ENCODE measurements at regions of chr1 and their contacts with region 1.

Region 1: GRCh38 chr1:9629445-9630201 is 21.9 kb upstream of the PIK3CD start:
- DNase-seq: peak; percentile 91
- ATAC-seq: peak; percentile 40
- H3K4me3 Mint-ChIP-seq: peak overlapping the region; percentile 88
- H3K27ac Mint-ChIP-seq: peak overlapping the region; percentile 98
- H3K4me1 Mint-ChIP-seq: peaks cover 63% of the 10 kb centered on the region
- H3K27me3 Mint-ChIP-seq: no peaks in the 10 kb centered on the region

Region 2: GRCh38 chr1:9486466-9487140 is 143.0 kb before region 1 on chr1:
- CTCF ChIA-PET with region 1: no interaction called
- POLR2A ChIA-PET with region 1: no interaction called
- DNase-seq: no peak
- ATAC-seq: no peak
- H3K4me3 Mint-ChIP-seq: no peak overlapping the region
- H3K27ac Mint-ChIP-seq: no peak overlapping the region
- H3K4me1 Mint-ChIP-seq: peaks cover 3% of the 10 kb centered on the region
- H3K27me3 Mint-ChIP-seq: peaks cover 2% of the 10 kb centered on the region

Region 3: GRCh38 chr1:9643351-9644256 is 14.0 kb after region 1 on chr1:
- CTCF ChIA-PET with region 1: interaction called, 73 read pairs
- POLR2A ChIA-PET with region 1: interaction called, 58 read pairs
- DNase-seq: no peak
- ATAC-seq: peak; percentile 10
- H3K4me3 Mint-ChIP-seq: peak overlapping the region; percentile 26
- H3K27ac Mint-ChIP-seq: peak overlapping the region; percentile 86
- H3K4me1 Mint-ChIP-seq: peaks cover 74% of the 10 kb centered on the region
- H3K27me3 Mint-ChIP-seq: no peaks in the 10 kb centered on the region

Region 4: DNA sequence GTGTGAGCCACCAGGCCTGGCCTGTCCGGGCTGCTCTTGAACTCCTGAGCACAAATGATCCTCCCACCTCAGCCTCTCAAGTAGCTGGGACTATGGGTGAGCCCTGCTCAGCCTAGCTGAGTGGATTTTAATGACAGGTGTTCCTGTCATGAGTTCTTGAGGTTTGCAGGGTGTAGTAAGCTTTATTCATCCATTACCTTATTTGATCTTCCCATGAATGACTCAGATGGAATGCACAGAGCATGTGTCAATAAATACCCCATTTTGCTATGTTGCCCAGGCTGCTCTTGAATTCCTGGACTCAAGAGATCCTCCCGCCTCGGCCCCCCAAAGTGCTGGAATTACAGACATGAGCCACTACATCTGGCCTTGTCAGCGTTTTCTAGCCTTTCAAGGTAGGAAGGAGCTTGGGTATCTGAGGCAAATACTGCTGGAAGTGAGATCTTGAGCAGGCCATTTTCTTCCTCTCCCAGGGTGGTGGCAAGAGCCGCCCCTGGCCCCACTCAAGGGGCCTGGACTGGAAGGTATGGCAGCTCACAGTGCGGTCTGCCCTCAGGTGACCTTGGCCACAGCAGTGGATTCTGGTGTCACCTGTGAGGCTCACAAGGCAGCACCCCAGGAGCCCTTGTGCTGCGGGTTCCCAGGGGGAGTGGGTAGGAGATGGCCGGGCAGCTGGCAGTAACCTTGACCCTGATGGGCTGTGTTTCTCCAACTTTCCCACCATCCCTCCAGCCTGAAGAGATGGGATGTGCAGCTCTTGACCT is 41.9 kb after region 1 on chr1:
- CTCF ChIA-PET with region 1: interaction called, 12 read pairs
- POLR2A ChIA-PET with region 1: interaction called, 8 read pairs
- DNase-seq: no peak
- ATAC-seq: peak; percentile 23
- H3K4me3 Mint-ChIP-seq: no peak overlapping the region
- H3K27ac Mint-ChIP-seq: peak overlapping the region; percentile 57
- H3K4me1 Mint-ChIP-seq: peaks cover 62% of the 10 kb centered on the region
- H3K27me3 Mint-ChIP-seq: no peaks in the 10 kb centered on the region

Region 5: DNA sequence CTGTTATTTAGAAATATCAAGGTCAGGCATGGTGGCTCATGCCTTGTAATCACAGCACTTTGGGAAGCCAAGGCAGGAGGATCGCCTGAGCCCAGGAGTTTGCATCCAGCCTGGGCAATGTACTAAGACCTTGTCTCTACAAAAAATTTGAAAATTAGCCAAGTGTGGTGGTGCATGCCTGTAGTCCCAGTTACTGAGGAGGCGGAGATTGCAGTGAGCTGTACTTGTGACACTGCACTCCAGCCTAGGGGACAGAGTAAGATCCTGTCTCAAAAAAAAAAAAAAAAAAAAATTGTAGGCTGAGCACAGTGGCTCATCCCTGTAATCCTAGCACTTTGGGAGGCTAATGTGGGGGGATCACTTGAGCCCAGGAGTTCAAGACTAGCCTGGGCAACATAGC is 67.2 kb after region 1 on chr1:
- CTCF ChIA-PET with region 1: interaction called, 72 read pairs
- POLR2A ChIA-PET with region 1: interaction called, 5 read pairs
- DNase-seq: no peak
- ATAC-seq: no peak
- H3K4me3 Mint-ChIP-seq: no peak overlapping the region
- H3K27ac Mint-ChIP-seq: no peak overlapping the region
- H3K4me1 Mint-ChIP-seq: peaks cover 53% of the 10 kb centered on the region
- H3K27me3 Mint-ChIP-seq: no peaks in the 10 kb centered on the region

Region 6: GRCh38 chr1:9717193-9718005 is 87.8 kb after region 1 on chr1:
- CTCF ChIA-PET with region 1: interaction called, 204 read pairs
- POLR2A ChIA-PET with region 1: interaction called, 152 read pairs
- DNase-seq: peak; percentile 98
- ATAC-seq: peak; percentile 73
- H3K4me3 Mint-ChIP-seq: peak overlapping the region; percentile 96
- H3K27ac Mint-ChIP-seq: peak overlapping the region; percentile 96
- H3K4me1 Mint-ChIP-seq: peaks cover 76% of the 10 kb centered on the region
- H3K27me3 Mint-ChIP-seq: no peaks in the 10 kb centered on the region

Region 7: GRCh38 chr1:9867408-9868243 is 238.0 kb after region 1 on chr1:
- CTCF ChIA-PET with region 1: interaction called, 17 read pairs
- POLR2A ChIA-PET with region 1: no interaction called
- DNase-seq: peak; percentile 92
- ATAC-seq: peak; percentile 97
- H3K4me3 Mint-ChIP-seq: no peak overlapping the region
- H3K27ac Mint-ChIP-seq: no peak overlapping the region
- H3K4me1 Mint-ChIP-seq: peaks cover 14% of the 10 kb centered on the region
- H3K27me3 Mint-ChIP-seq: no peaks in the 10 kb centered on the region

Measured in activated CD8-positive, alpha-beta T cell treated with anti-CD3 and anti-CD28 coated beads, Interleukin-2, amount 10 ng/mL, durations not matched to agents 7 days and 5 days (primary cell).